Activated T-helper 2 cell treated with anti-CD3 and anti-CD28 coated beads, Interferon-gamma antibody, Interleukin-2, Interleukin-4, amounts not matched to agents 10 μg/mL and 5 μg/mL and 100 μg/mL, durations not matched to agents 14 hours and 24 hours and 36 hours (primary cell): ENCODE measurements at regions of chr7 and their contacts with region 1.

Region 1: DNA sequence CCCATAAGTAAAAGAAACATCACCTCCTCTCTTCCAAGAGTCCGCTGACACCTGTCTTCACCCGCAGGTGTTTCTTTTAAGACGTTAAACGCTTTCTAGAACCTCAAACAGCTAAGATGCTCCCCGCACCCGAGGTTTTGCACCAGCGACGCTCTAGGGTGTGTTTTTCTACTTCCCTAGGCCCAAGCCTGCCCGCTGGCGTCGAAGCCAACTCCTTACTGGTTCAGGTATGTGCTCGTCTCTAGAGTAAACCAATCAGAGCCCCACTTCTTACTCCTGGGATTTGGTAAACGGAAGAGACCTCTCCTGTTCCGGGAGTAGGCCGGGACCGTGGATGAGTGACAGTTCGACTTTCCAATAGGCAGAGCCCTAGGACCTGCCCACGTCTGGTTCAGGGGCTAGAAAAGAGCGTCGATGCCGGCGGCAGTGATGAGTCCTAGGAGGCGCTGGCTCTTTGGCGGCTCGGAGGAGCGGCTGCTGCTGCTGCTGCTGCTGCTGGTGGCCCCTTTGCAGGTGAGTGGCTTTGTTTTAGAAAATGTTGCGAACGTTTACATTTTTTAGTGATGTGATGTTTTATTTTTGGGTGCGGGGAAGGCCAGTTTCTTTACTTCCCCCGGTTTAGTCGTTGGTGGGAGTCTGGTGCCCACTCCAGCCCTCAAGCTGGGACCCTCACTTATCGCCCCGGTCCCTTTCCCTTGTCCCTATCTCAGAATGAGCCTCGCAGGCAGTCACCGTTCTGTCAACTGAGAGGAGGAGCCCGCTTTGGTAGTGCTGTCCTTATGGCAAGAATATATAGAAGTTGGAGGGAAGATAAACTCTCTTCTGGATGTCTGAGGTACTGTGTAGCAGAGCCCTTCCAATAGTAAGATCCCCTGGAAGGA is at the start of gene BPGM:
- DNase-seq: peak; percentile 97
- H3K4me3 Mint-ChIP-seq: no peak within 1 kb of the TSS
- H3K27ac Mint-ChIP-seq: no peak within 1 kb of the TSS
- H3K4me1 Mint-ChIP-seq: peaks cover 26% of the 10 kb centered on the region
- H3K27me3 Mint-ChIP-seq: no peaks in the 10 kb centered on the region
- total RNA-seq, gene BPGM: 28.0 and 29.2 TPM in 2 replicates

Region 2: GRCh38 chr7:133081599-133082389 is 1564.9 kb before region 1 on chr7 and contains the start of gene CHCHD3:
- intact Hi-C with region 1: loop called (anchors 5 kb)
- DNase-seq: peak; percentile 96
- H3K4me3 Mint-ChIP-seq: peak within 1 kb of the TSS; percentile 93
- H3K27ac Mint-ChIP-seq: peak within 1 kb of the TSS; percentile 91
- H3K4me1 Mint-ChIP-seq: peaks cover 19% of the 10 kb centered on the region
- H3K27me3 Mint-ChIP-seq: peaks cover 8% of the 10 kb centered on the region
- total RNA-seq, gene CHCHD3: 67.0 and 69.3 TPM in 2 replicates

Region 3: DNA sequence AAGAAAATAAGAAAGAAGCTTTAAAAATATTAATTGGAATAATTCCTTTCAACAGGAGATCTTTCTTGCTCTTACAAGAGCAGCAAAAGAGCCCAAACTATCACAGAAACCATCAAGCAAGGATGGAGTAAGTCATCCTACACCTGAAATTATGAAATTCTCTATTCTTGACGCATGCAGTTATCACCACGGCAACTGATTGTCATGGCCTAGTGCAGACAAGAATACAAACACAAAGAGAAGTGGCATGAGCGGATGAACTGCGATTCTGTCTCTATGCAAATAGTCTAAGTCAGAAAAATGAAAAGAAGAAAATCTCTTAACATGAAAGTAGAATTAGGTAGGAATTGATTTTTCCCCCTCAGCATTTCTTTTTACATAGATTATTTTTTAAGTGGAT is 275.1 kb before region 1 on chr7:
- intact Hi-C with region 1: no loop called
- DNase-seq: no peak
- H3K4me3 Mint-ChIP-seq: no peak overlapping the region
- H3K27ac Mint-ChIP-seq: no peak overlapping the region
- H3K4me1 Mint-ChIP-seq: no peaks in the 10 kb centered on the region
- H3K27me3 Mint-ChIP-seq: peaks cover 18% of the 10 kb centered on the region

Region 4: DNA sequence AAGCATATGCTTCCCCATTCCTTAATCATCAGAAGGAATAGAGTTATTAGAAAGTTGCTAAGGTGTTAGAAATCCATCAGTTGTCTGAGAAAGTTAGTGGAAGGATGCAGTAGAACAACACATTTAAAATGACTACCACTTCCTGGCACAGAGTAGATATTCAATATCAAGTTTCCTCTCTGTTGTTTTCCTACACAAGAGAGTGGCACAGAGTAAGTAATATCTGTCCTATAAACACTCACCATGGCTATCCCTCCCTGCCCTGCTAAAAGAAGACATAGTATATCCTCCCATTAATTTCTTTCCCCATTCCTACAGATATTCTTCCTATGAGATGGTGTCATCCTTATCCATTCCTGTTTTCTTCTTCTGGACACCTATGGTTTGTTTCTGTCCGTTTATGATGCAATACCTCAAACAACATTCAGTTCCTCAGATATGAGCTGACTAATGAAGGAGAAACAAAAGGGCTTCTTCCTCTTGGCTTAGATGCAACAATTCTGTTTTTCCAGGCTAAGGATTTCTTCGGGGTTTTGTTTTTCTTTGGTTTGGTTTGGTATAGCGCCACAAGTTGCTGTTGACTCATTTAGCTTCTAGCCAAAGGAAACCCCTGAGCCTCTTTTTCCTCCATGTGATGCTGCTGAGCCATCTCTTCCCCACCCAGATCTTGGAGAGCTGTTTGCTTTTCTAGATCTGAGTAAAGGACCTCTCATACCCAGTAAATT is 32.9 kb before region 1 on chr7:
- intact Hi-C with region 1: loop called (anchors 1 kb)
- DNase-seq: no peak
- H3K4me3 Mint-ChIP-seq: no peak overlapping the region
- H3K27ac Mint-ChIP-seq: peak overlapping the region; percentile 74
- H3K4me1 Mint-ChIP-seq: peaks cover 14% of the 10 kb centered on the region
- H3K27me3 Mint-ChIP-seq: peaks cover 25% of the 10 kb centered on the region

Region 5: GRCh38 chr7:134710859-134711624 is 64.4 kb after region 1 on chr7:
- intact Hi-C with region 1: loop called (anchors 2 kb)
- DNase-seq: peak; percentile 49
- H3K4me3 Mint-ChIP-seq: peak overlapping the region; percentile 77
- H3K27ac Mint-ChIP-seq: peak overlapping the region; percentile 87
- H3K4me1 Mint-ChIP-seq: peaks cover 33% of the 10 kb centered on the region
- H3K27me3 Mint-ChIP-seq: no peaks in the 10 kb centered on the region

Region 6: GRCh38 chr7:134986363-134987251 is 339.9 kb after region 1 on chr7 and contains the start of gene AGBL3:
- intact Hi-C with region 1: loop called (anchors 1 kb)
- DNase-seq: peak; percentile 85
- H3K4me3 Mint-ChIP-seq: peak within 1 kb of the TSS; percentile 95
- H3K27ac Mint-ChIP-seq: peak within 1 kb of the TSS; percentile 94
- H3K4me1 Mint-ChIP-seq: peaks cover 33% of the 10 kb centered on the region
- H3K27me3 Mint-ChIP-seq: no peaks in the 10 kb centered on the region
- total RNA-seq, gene AGBL3: 1.6 and 3.9 TPM in 2 replicates

Region 7: GRCh38 chr7:135170274-135170997 is 523.8 kb after region 1 on chr7 and contains the start of gene CYREN:
- intact Hi-C with region 1: loop called (anchors 2 kb)
- DNase-seq: peak; percentile 82
- H3K4me3 Mint-ChIP-seq: peak within 1 kb of the TSS; percentile 95
- H3K27ac Mint-ChIP-seq: peak within 1 kb of the TSS; percentile 95
- H3K4me1 Mint-ChIP-seq: peaks cover 33% of the 10 kb centered on the region
- H3K27me3 Mint-ChIP-seq: no peaks in the 10 kb centered on the region
- total RNA-seq, gene CYREN: 50.1 and 52.9 TPM in 2 replicates

Region 8: GRCh38 chr7:135662373-135663114 is 1015.9 kb after region 1 on chr7 and contains the start of gene STMP1:
- intact Hi-C with region 1: loop called (anchors 2 kb)
- DNase-seq: peak; percentile 92
- H3K4me3 Mint-ChIP-seq: peak within 1 kb of the TSS; percentile 95
- H3K27ac Mint-ChIP-seq: peak within 1 kb of the TSS; percentile 91
- H3K4me1 Mint-ChIP-seq: peaks cover 28% of the 10 kb centered on the region
- H3K27me3 Mint-ChIP-seq: no peaks in the 10 kb centered on the region
- total RNA-seq, gene STMP1: 24.3 and 25.1 TPM in 2 replicates

Region 9: DNA sequence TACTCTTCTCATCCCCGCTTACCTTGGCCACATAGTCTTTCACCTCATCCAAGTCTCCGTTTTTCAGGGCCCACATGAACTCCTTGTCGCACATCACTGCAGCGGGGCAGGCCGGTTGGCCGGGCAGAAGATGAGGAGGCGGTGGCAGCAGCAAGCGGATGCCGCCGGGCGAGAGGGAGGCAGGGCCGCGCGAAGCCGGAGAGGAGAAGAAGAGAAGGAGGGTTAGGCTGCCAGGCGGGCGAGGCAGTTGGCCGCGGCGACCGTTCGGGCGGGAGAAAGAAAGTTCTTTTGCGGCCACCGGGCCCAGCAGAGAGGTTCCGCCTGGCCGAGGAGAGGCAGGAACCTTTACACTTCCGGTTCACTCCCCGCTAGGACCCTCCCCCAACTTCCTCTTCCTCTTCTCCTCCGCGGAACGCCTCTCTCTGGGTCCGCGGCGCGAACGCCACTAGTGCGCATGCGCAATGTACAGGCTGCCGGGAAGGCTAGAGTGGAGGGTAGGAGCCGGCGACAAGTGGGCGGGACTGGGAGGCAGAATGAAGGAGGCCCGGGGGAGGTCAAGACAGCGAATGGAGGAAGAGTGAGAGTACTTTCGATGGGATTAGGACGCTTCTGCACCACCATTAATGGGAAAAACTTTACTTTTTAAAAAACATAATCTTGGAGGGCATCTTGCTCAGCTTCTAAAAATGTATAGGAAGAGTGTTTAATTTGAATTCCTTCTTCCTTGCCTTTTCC is 1330.5 kb after region 1 on chr7 and contains the start of gene MTPN:
- intact Hi-C with region 1: no loop called
- DNase-seq: peak; percentile 96
- H3K4me3 Mint-ChIP-seq: peak within 1 kb of the TSS; percentile 88
- H3K27ac Mint-ChIP-seq: peak within 1 kb of the TSS; percentile 76
- H3K4me1 Mint-ChIP-seq: peaks cover 60% of the 10 kb centered on the region
- H3K27me3 Mint-ChIP-seq: no peaks in the 10 kb centered on the region
- total RNA-seq, gene MTPN: 113 and 118 TPM in 2 replicates